ENCODE measurements at regions of chr6 and their contacts with region 1.

Region 1: GRCh38 chr6:138588805-138589434 is 89.6 kb upstream of the NHSL1 start:
- DNase-seq: peak; percentile 64
- H3K4me3 Mint-ChIP-seq: no peak overlapping the region
- H3K27ac Mint-ChIP-seq: no peak overlapping the region
- H3K4me1 Mint-ChIP-seq: peaks cover 21% of the 10 kb centered on the region
- H3K27me3 Mint-ChIP-seq: no peaks in the 10 kb centered on the region

Region 2: DNA sequence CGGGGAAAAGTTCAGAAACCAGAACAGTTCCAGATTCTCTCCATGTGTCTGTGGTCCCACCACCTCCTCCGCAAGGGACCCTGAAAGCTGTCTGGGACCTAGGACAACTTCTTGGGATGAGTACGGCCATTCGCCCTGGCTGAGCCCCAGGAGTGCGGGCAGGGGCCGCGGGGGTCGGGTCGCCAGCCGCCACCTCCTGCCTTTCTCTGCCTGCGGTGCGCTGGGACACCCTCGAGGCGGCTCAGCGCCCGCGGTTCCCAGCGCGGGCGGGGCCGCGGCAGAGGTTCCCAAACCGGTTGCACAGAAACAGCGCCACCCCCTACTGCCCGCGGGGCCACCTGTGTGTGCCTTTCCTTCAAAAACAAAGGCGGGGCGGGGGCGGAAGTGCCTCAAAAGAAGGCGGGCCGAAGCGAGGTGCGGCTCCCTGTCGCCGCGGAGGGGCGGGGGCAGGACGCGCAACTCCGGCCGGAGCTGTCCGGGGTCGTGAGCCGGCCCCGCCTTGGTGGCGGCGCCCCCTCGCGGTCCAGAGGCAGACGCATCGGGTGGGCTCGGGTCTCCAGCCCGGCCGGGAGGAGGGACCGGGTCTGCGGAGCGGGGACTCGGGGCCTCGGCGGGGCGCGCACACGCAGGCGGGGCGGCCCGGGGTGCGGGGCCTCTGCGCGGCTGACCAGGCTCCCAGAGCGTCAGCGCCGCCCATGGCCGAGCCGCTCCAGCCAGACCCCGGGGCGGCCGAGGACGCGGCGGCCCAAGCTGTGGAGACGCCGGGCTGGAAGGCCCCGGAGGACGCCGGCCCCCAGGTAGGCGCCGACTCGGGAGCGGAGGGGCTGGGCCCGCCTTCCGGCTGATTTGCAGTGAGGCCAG is 184.9 kb before region 1 on chr6 and contains the start of gene HEBP2:
- CTCF ChIA-PET with region 1: no interaction called
- POLR2A ChIA-PET with region 1: no interaction called
- intact Hi-C with region 1: loop called (anchors 2 kb)
- DNase-seq: peak; percentile 97
- H3K4me3 Mint-ChIP-seq: peak within 1 kb of the TSS; percentile 79
- H3K27ac Mint-ChIP-seq: peak within 1 kb of the TSS; percentile 58
- H3K4me1 Mint-ChIP-seq: peaks cover 23% of the 10 kb centered on the region
- H3K27me3 Mint-ChIP-seq: no peaks in the 10 kb centered on the region
- total RNA-seq, gene HEBP2: 49.5 to 49.6 TPM

Region 3: DNA sequence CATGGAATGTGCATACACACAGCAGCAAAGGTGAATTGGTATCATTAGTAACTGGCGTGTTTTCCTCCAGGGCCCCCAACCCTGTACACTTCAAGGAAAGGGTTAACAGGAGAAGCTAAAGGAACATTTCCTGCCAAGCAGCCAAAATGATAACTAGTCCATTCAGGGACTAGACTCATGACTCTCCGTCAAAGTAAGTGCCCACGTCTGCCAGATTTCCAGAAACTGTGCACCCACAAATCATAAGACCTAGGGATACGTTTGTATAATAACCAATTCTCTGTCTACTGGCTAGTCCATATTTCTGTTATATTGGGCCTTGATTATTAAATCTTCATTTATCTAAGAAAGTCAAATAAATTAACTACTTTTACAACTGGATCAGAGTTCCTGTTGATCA is 13.7 kb before region 1 on chr6:
- CTCF ChIA-PET with region 1: interaction called, 6 read pairs
- POLR2A ChIA-PET with region 1: no interaction called
- intact Hi-C with region 1: loop called (anchors 2 kb)
- DNase-seq: no peak
- H3K4me3 Mint-ChIP-seq: no peak overlapping the region
- H3K27ac Mint-ChIP-seq: no peak overlapping the region
- H3K4me1 Mint-ChIP-seq: peaks cover 4% of the 10 kb centered on the region
- H3K27me3 Mint-ChIP-seq: peaks cover 5% of the 10 kb centered on the region

Region 4: GRCh38 chr6:138645090-138645489 is 56.2 kb after region 1 on chr6:
- CTCF ChIA-PET with region 1: no interaction called
- POLR2A ChIA-PET with region 1: no interaction called
- intact Hi-C with region 1: no loop called
- DNase-seq: no peak
- H3K4me3 Mint-ChIP-seq: no peak overlapping the region
- H3K27ac Mint-ChIP-seq: no peak overlapping the region
- H3K4me1 Mint-ChIP-seq: no peaks in the 10 kb centered on the region
- H3K27me3 Mint-ChIP-seq: peaks cover 1% of the 10 kb centered on the region

Region 5: GRCh38 chr6:138765896-138766655 is 177.2 kb after region 1 on chr6:
- CTCF ChIA-PET with region 1: interaction called, 227 read pairs
- POLR2A ChIA-PET with region 1: no interaction called
- intact Hi-C with region 1: loop called (anchors 1 kb)
- DNase-seq: no peak
- H3K4me3 Mint-ChIP-seq: no peak overlapping the region
- H3K27ac Mint-ChIP-seq: no peak overlapping the region
- H3K4me1 Mint-ChIP-seq: peaks cover 9% of the 10 kb centered on the region
- H3K27me3 Mint-ChIP-seq: no peaks in the 10 kb centered on the region

Region 6: DNA sequence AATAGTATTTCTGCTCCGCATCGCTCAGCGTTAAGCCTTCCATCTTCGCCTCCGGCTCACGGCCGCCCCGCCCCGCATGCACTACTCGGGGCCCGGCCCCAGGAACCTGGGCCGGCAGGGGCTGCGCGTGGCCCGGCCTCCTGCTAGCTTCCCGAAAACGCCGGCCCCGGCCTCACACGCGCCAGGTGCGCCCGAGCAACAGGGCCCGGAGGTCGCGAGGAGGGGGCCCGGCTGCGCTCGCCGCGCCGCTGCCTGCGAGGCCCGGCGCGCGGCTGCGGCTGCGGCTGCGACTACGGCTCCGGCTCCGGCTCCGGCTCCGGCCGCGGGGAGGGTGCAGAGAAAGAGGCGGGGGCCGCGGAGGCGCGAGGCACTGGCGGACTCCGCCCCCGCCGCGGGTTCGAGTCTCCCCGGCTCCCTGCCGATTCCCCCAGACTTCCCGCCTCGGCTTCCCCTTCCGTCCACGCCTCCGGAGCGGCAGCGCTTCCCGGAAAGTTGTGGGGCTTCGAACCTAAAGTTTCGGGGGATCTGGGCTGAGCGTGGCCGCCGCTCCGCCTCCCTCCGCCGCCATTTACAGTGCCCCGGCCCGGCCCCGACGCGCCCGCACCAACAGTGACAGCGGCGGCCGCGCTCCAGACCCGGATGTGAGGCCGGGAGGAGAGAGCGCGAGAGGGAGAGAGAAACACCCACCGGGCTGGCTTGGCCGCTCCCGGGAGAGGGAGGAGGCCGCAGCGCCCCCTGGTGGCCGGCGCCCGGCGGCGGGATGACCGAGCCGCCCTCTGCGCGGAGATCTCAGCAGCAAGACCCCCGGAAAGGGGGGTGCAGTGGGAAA is 398.9 kb after region 1 on chr6 and contains the start of gene REPS1:
- CTCF ChIA-PET with region 1: interaction called, 4 read pairs
- POLR2A ChIA-PET with region 1: no interaction called
- intact Hi-C with region 1: loop called (anchors 2 kb)
- DNase-seq: peak; percentile 94
- H3K4me3 Mint-ChIP-seq: peak within 1 kb of the TSS; percentile 85
- H3K27ac Mint-ChIP-seq: peak within 1 kb of the TSS; percentile 89
- H3K4me1 Mint-ChIP-seq: peaks cover 19% of the 10 kb centered on the region
- H3K27me3 Mint-ChIP-seq: no peaks in the 10 kb centered on the region
- total RNA-seq, gene REPS1: 50.7 to 57.9 TPM

Measured in activated CD4-positive, alpha-beta memory T cell treated with anti-CD3 and anti-CD28 coated beads for 36 hours (primary cell).